ENCODE measurements at regions of chr1 and their contacts with region 1.

Region 1: GRCh38 chr1:62436466-62437256 is at the start of gene USP1:
- DNase-seq: peak; percentile 99
- ATAC-seq: peak; percentile 84
- H3K4me3 Mint-ChIP-seq: peak within 1 kb of the TSS; percentile 92
- H3K27ac Mint-ChIP-seq: peak within 1 kb of the TSS; percentile 99
- H3K4me1 Mint-ChIP-seq: peaks cover 18% of the 10 kb centered on the region
- H3K27me3 Mint-ChIP-seq: no peaks in the 10 kb centered on the region
- CTCF ChIP-seq: no peak
- total RNA-seq, gene USP1: 67.3 to 68.1 TPM

Region 2: DNA sequence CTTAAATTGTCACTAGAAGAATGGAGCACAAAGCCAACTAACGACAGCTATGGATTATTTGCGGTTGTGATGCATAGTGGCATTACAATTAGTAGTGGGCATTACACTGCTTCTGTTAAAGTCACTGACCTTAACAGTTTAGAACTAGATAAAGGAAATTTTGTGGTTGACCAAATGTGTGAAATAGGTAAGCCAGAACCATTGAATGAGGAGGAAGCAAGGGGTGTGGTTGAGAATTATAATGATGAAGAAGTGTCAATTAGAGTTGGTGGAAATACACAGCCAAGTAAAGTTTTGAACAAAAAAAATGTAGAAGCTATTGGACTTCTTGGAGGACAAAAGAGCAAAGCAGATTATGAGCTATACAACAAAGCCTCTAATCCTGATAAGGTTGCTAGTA is 13.6 kb after region 1 on chr1:
- CTCF ChIA-PET with region 1: interaction called, 4 read pairs
- POLR2A ChIA-PET with region 1: interaction called, 15 read pairs
- intact Hi-C with region 1: no loop called
- DNase-seq: no peak
- ATAC-seq: no peak
- H3K4me3 Mint-ChIP-seq: no peak overlapping the region
- H3K27ac Mint-ChIP-seq: peak overlapping the region; percentile 35
- H3K4me1 Mint-ChIP-seq: peaks cover 21% of the 10 kb centered on the region
- H3K27me3 Mint-ChIP-seq: no peaks in the 10 kb centered on the region
- CTCF ChIP-seq: no peak

Region 3: DNA sequence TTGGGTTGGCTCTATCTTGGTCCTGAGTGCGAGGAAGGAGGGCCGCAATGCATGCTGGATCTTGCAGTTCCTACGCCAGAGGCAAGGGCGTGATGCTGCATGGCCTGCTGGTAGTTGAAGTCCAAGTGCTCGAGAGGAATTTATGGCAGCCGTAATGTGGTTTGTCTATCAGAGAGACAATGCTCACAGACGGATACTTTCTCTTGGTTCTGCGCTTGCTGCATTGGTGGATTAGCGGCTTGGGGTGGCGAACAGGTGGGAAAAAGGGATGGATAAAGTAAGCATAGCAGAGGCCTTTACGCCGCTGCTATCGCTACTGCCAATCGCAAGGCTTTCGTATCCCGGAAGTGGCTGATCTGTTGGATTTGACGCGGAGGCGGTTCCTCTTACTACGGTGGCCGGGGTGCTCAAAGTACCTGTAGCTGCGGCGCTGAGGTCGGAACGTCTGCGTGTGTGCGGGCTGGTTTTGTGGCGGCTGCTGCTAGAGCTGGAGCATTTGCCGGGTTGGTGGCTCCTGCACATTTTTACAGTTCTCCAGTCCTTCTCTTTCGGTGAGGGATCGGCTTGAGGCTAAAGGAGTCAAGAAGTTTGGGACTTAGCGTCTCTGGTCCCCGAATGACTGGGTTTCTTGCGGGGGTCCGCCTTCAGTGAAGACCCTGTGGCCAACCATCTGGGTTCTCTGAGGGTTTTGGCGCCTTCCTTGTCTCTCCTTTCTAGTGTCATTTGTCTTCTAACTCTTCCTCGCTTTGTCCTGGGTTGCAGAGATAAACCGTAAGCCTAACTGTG is 347.3 kb after region 1 on chr1 and contains the start of gene ATG4C:
- CTCF ChIA-PET with region 1: no interaction called
- POLR2A ChIA-PET with region 1: interaction called, 3 read pairs
- intact Hi-C with region 1: loop called (anchors 2 kb)
- DNase-seq: peak; percentile 98
- ATAC-seq: peak; percentile 99
- H3K4me3 Mint-ChIP-seq: no peak within 1 kb of the TSS
- H3K27ac Mint-ChIP-seq: no peak within 1 kb of the TSS
- H3K4me1 Mint-ChIP-seq: peaks cover 15% of the 10 kb centered on the region
- H3K27me3 Mint-ChIP-seq: peaks cover 5% of the 10 kb centered on the region
- CTCF ChIP-seq: no peak
- total RNA-seq, gene ATG4C: 13.7 to 15.5 TPM

Measured in activated CD8-positive, alpha-beta T cell treated with anti-CD3 and anti-CD28 coated beads for 36 hours (primary cell).